Lower lobe of right lung (tissue), 2 donors: ENCODE measurements at regions of chr5 and their contacts with region 1.

Region 1: GRCh38 chr5:179166886-179167841 is 107.0 kb downstream of the ZNF354C start:
- DNase-seq: peak; percentile 59
- ATAC-seq: peak; percentile 72 to 82
- H3K4me3 ChIP-seq: peak overlapping the region; percentile 40
- H3K27ac ChIP-seq: no peak overlapping the region
- H3K4me1 ChIP-seq: peaks cover 12% of the 10 kb centered on the region
- H3K27me3 ChIP-seq: peaks cover 9% of the 10 kb centered on the region
- CTCF ChIP-seq: peak; percentile 95

Region 2: DNA sequence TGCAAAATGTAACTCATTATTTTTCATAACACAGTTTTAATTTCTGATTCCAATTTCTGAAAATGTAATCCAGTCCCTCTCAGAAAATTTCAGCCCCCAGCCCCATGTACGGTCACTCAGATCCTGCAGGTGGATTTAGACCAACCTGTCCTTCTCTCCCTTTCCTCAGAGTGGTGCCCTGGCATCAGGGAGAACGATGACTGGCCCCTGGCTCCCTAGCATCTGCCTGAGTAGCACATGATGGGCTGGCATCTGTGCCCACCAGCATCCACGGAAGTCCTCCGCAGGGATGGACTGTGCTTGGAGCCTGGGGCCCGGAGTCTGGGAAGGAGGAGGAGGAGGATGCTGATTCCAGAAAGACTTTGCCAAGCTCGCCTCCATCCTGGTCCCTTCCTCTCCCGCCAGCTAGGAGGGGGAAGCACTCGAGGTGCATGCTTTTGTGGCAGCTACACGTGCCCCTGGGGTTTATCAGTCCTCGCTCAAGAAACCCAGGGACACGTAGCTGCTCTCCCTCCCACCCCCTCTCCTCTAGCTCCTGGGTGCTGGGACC is 328.8 kb after region 1 on chr5:
- intact Hi-C with region 1: loop called (anchors 10 kb)
- DNase-seq: no peak
- ATAC-seq: no peak
- H3K4me3 ChIP-seq: no peak overlapping the region
- H3K27ac ChIP-seq: no peak overlapping the region
- H3K4me1 ChIP-seq: no peaks in the 10 kb centered on the region
- H3K27me3 ChIP-seq: peaks cover 3% of the 10 kb centered on the region
- CTCF ChIP-seq: no peak

Region 3: GRCh38 chr5:179679014-179679674 is 512.0 kb after region 1 on chr5:
- intact Hi-C with region 1: no loop called
- DNase-seq: peak; percentile 89
- ATAC-seq: peak; percentile 78 to 80
- H3K4me3 ChIP-seq: peak overlapping the region; percentile 82
- H3K27ac ChIP-seq: peak overlapping the region; percentile 91
- H3K4me1 ChIP-seq: peaks cover 20% of the 10 kb centered on the region
- H3K27me3 ChIP-seq: no peaks in the 10 kb centered on the region
- CTCF ChIP-seq: peak; percentile 48